ENCODE measurements at regions of chr1 and their contacts with region 1.

Region 1: DNA sequence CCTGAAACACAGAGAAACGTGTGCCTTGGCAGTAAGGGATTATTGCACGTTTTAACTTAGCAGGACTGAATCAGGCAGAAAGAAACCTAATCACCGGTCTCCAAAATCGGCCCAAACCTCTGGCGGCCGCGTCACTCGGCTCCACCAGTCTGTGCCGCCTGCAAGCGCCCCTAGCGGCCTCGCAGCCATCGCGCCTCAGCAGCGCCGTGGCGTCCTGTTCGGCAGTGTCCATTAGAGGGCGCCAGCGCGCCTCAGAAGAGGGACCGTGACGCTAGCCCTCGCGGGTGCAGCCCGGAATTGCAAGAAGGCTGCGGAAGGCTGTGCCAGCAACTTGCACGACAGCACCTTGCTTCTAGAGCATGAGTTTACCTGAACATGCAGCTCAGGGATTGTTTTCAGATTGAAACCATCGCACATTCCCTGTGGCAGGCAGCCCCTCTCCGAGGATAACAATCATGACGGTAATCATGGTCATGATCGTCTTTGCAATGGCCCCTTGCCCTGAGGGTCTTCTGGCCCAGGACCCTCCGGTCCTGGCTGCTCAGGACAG is 164.4 kb downstream of the TRIM33 start:
- DNase-seq: peak; percentile 92 to 99 (median 98)
- ATAC-seq: peak; percentile 98
- H3K4me3 ChIP-seq: peak overlapping the region; percentile 55
- H3K4me3 Mint-ChIP-seq: peak overlapping the region; percentile 97
- H3K27ac ChIP-seq: peak overlapping the region in 1 of 2 donors; percentile 22
- H3K27ac Mint-ChIP-seq: peak overlapping the region; percentile 79
- H3K4me1 ChIP-seq: peaks cover 49% of the 10 kb centered on the region
- H3K4me1 Mint-ChIP-seq: peaks cover 31% of the 10 kb centered on the region
- H3K27me3 ChIP-seq: no peaks in the 10 kb centered on the region
- H3K27me3 Mint-ChIP-seq: no peaks in the 10 kb centered on the region
- CTCF ChIP-seq: peak; percentile 100

Region 2: GRCh38 chr1:113389953-113390834 is 956.4 kb before region 1 on chr1 and contains the start of gene MAGI3:
- CTCF ChIA-PET with region 1: no interaction called
- POLR2A ChIA-PET with region 1: no interaction called
- intact Hi-C with region 1: loop called in 1 of 2 experiments (anchors 10 kb)
- DNase-seq: peak; percentile 83 to 97 (median 92)
- ATAC-seq: peak; percentile 87
- H3K4me3 ChIP-seq: peak within 1 kb of the TSS; percentile 91
- H3K4me3 Mint-ChIP-seq: peak within 1 kb of the TSS; percentile 92
- H3K27ac ChIP-seq: peak within 1 kb of the TSS; percentile 43 to 46
- H3K27ac Mint-ChIP-seq: peak within 1 kb of the TSS; percentile 67
- H3K4me1 ChIP-seq: peaks cover 25% of the 10 kb centered on the region
- H3K4me1 Mint-ChIP-seq: peaks cover 28% of the 10 kb centered on the region
- H3K27me3 ChIP-seq: no peaks in the 10 kb centered on the region
- H3K27me3 Mint-ChIP-seq: no peaks in the 10 kb centered on the region
- CTCF ChIP-seq: no peak
- total RNA-seq, gene MAGI3: 6.7 to 8.7 TPM

Region 3: DNA sequence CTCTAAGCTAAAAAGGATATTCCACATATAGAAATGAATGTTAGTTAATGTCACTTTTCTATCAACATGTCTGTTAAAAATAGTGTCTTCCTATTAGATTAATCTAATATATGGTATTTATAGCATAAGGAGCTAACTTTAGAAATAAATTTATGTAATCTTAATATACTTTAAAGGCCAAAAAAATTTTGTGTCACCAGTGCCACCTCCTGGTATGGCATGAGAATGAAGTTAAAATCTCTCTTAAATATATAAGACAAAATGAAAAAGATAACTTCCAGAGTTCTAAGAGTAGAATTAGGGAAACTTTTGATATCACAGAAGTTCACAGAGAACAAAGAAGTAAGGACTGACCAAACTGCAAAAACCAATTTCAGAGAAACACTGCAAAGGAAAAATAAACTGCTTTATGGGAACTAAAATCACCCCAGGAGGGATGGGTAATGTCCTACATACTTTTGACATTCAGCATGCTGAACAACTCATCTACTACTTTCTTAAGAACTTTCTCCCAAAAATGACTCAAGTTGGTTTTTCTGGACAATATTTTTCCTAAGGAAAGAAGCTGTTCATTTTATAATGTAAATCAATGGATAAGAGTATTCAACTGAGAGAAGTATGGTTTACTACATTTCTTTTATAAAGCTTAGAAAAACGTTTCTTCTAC is 81.7 kb after region 1 on chr1:
- CTCF ChIA-PET with region 1: interaction called, 7 read pairs
- POLR2A ChIA-PET with region 1: interaction called, 4 read pairs
- intact Hi-C with region 1: loop called (anchors 1 to 2 kb)
- DNase-seq: peak in 4 of 14 experiments; percentile 28 to 53 (median 40)
- ATAC-seq: peak; percentile 41
- H3K4me3 ChIP-seq: no peak overlapping the region
- H3K4me3 Mint-ChIP-seq: no peak overlapping the region
- H3K27ac ChIP-seq: no peak overlapping the region
- H3K27ac Mint-ChIP-seq: no peak overlapping the region
- H3K4me1 ChIP-seq: no peaks in the 10 kb centered on the region
- H3K4me1 Mint-ChIP-seq: no peaks in the 10 kb centered on the region
- H3K27me3 ChIP-seq: no peaks in the 10 kb centered on the region
- H3K27me3 Mint-ChIP-seq: no peaks in the 10 kb centered on the region
- CTCF ChIP-seq: peak; percentile 59

Region 4: GRCh38 chr1:114558544-114558943 is 212.0 kb after region 1 on chr1:
- CTCF ChIA-PET with region 1: no interaction called
- POLR2A ChIA-PET with region 1: no interaction called
- intact Hi-C with region 1: loop called in 1 of 2 experiments (anchors 5 kb)
- DNase-seq: peak in 3 of 14 experiments; percentile 36 to 41 (median 37)
- ATAC-seq: peak; percentile 52
- H3K4me3 ChIP-seq: no peak overlapping the region
- H3K4me3 Mint-ChIP-seq: no peak overlapping the region
- H3K27ac ChIP-seq: no peak overlapping the region
- H3K27ac Mint-ChIP-seq: no peak overlapping the region
- H3K4me1 ChIP-seq: no peaks in the 10 kb centered on the region
- H3K4me1 Mint-ChIP-seq: no peaks in the 10 kb centered on the region
- H3K27me3 ChIP-seq: no peaks in the 10 kb centered on the region
- H3K27me3 Mint-ChIP-seq: no peaks in the 10 kb centered on the region
- CTCF ChIP-seq: peak; percentile 65

Region 5: GRCh38 chr1:114670083-114671010 is 323.8 kb after region 1 on chr1:
- CTCF ChIA-PET with region 1: interaction called, 4 read pairs
- POLR2A ChIA-PET with region 1: no interaction called
- intact Hi-C with region 1: loop called (anchors 2 kb)
- DNase-seq: peak; percentile 74 to 93 (median 84)
- ATAC-seq: peak; percentile 94
- H3K4me3 ChIP-seq: peak overlapping the region; percentile 81
- H3K4me3 Mint-ChIP-seq: peak overlapping the region; percentile 99
- H3K27ac ChIP-seq: no peak overlapping the region
- H3K27ac Mint-ChIP-seq: peak overlapping the region; percentile 77
- H3K4me1 ChIP-seq: peaks cover 14% of the 10 kb centered on the region
- H3K4me1 Mint-ChIP-seq: peaks cover 12% of the 10 kb centered on the region
- H3K27me3 ChIP-seq: peaks cover 5 to 8% of the 10 kb centered on the region in 2 experiments
- H3K27me3 Mint-ChIP-seq: peaks cover 28% of the 10 kb centered on the region
- CTCF ChIP-seq: no peak

Region 6: GRCh38 chr1:115052454-115053083 is 706.0 kb after region 1 on chr1:
- CTCF ChIA-PET with region 1: no interaction called
- POLR2A ChIA-PET with region 1: no interaction called
- intact Hi-C with region 1: loop called in 1 of 2 experiments (anchors 10 kb)
- DNase-seq: peak; percentile 10 to 78 (median 52)
- ATAC-seq: peak; percentile 98
- H3K4me3 ChIP-seq: no peak overlapping the region
- H3K4me3 Mint-ChIP-seq: no peak overlapping the region
- H3K27ac ChIP-seq: no peak overlapping the region
- H3K27ac Mint-ChIP-seq: no peak overlapping the region
- H3K4me1 ChIP-seq: peaks cover 6% of the 10 kb centered on the region
- H3K4me1 Mint-ChIP-seq: peaks cover 6% of the 10 kb centered on the region
- H3K27me3 ChIP-seq: no peaks in the 10 kb centered on the region
- H3K27me3 Mint-ChIP-seq: no peaks in the 10 kb centered on the region
- CTCF ChIP-seq: peak; percentile 97

Region 7: DNA sequence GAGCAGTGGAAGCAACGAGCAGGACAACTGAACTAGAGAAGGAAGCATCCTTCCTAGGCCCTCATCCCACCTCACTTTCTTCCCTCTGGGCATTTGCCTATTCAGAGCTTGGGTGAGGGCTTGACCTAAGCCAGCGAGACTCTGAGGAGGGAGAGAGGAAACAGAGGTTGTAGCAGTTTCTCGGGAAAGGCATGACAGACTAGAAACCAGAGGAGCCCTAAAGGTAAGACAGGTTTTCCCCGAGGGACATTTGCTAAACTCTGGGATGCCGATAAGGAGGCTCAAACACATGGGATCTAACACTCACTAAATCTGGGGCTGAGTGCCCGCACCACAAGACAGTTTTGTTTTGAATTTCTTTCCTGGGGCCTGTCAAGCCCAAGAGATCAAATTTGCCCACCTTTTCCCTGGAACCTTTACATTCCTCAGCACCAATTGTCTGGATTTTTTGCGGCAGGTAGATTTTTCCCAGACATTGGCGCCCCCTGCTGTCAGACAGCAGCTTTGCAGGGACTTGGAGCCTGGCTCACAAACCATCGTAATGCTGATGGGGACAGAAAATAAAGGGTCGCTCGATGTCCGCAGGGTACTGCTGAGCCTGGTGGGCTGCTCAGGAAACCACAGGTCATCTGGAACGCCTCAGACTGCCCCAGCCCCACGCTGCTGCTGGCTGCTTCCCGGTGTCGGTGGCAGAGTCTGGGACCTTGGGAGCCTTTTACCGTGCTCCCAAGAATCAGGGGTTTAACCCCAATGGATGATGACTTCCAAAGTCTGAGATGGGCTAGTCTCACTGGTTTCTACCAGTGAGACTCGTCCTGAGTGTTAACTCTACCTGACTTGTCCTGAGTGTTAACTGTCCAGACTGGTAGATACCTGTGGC is 766.2 kb after region 1 on chr1:
- CTCF ChIA-PET with region 1: no interaction called
- POLR2A ChIA-PET with region 1: interaction called, 3 read pairs
- intact Hi-C with region 1: loop called in 1 of 2 experiments (anchors 5 kb)
- DNase-seq: peak; percentile 26 to 77 (median 53)
- ATAC-seq: peak; percentile 54
- H3K4me3 ChIP-seq: no peak overlapping the region
- H3K4me3 Mint-ChIP-seq: no peak overlapping the region
- H3K27ac ChIP-seq: no peak overlapping the region
- H3K27ac Mint-ChIP-seq: no peak overlapping the region
- H3K4me1 ChIP-seq: peaks cover 20% of the 10 kb centered on the region
- H3K4me1 Mint-ChIP-seq: peaks cover 14% of the 10 kb centered on the region
- H3K27me3 ChIP-seq: no peaks in the 10 kb centered on the region
- H3K27me3 Mint-ChIP-seq: no peaks in the 10 kb centered on the region
- CTCF ChIP-seq: peak; percentile 99

Measured in CD4-positive, alpha-beta T cell (primary cell).